PC-9 (cell line): ENCODE measurements at regions of chr10 and their contacts with region 1.

Region 1: DNA sequence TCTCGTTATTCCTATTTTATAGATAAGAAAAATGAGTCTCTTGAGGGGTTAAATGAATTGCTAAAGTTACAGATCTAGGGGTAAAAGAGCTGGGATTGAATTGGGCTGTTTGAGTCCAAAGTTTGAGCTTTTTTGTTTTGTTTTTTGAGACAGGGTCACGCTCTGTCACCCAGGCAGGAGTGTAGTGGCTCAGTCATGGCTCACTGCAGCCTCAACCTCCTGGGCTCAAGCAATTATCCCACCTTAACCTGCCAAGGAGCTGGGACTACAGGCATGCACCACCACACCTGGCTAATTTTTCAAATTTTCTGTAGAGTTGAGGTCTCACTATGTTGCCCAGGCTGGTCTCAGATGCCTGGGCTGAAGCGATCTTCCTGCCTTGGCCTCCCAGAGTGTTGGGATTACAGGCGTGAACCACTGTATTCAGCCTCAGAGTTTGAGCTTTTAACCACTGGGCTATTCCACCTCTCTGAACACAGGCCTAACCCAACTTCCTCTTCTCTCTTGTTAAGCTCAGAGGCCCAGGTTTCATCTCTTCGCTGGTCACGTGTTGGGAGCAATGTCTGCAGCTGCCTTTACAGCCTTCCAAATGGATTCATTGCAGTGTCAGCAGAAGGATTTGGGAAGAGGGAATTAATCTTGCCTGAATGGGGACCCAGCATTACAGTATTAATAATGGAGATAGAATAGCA is 8.0 kb downstream of the SUFU start:
- DNase-seq: no peak
- H3K4me3 ChIP-seq: no peak overlapping the region
- H3K27ac ChIP-seq: no peak overlapping the region
- H3K4me1 ChIP-seq: peaks cover 35% of the 10 kb centered on the region
- H3K27me3 ChIP-seq: no peaks in the 10 kb centered on the region
- CTCF ChIP-seq: no peak

Region 2: DNA sequence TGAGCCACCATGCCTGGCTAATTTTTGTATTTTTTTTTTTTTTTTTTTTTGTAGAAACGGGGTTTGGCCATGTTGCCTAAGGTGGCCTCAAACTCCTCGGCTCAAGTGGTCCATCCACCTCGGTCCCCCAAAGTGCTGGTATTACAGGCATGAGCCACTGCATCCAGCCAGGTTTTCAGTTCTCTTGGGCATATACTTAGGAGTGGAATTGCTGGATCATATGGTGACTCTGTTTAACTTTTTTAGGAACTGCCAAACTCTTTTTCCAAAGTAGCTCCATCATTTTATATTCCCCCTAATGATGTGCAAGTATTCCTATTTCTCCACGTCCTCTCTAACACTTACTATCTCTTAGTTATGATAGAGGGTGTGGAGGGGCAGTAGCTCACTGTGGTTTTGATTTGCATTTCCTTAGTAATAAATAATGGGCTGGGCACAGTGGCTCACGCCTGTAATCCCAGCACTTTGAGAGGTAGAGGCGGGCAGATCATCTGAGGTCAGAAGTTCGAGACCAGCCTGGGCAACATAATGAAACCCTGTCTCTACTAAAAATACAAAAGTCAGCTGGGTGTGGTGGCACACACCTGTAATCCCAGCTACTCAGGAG is 33.6 kb after region 1 on chr10:
- CTCF ChIA-PET with region 1: no interaction called
- POLR2A ChIA-PET with region 1: interaction called, 15 read pairs
- intact Hi-C with region 1: no loop called
- DNase-seq: no peak
- H3K4me3 ChIP-seq: no peak overlapping the region
- H3K27ac ChIP-seq: no peak overlapping the region
- H3K4me1 ChIP-seq: no peaks in the 10 kb centered on the region
- H3K27me3 ChIP-seq: no peaks in the 10 kb centered on the region
- CTCF ChIP-seq: no peak